Activated CD4-positive, alpha-beta T cell treated with anti-CD3 and anti-CD28 coated beads for 36 hours (primary cell): ENCODE measurements at regions of chr17 and their contacts with region 1.

Region 1: DNA sequence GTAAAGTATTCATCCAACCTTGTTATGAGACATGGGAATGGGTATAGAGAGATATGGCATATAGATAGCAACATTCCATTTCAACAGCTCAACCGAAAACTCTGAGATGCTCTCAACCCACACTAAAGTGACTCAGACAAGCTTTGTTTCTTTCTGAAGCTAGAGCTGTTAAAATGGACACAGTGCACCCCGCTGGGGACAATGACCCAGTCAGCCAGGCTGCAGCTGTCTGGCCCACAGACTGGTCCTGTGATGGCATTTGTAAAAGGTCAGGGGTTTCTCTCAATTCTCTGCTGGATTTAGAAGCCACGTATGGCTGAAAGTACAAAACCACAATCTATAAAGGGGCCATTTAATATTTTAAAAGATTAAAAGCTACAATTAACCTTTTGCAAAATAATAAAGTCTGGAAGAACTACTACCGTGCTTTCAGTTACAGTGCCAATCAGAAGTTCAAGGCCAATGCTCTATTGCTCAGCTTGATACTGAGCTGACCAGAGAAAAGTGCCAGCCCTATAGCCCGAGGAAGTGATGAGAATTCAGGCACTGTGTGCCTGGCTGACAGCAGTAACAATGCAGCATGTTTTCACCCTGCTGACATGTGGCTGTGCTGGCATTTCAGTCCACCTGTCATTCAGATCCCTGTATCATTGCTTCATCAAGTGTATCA is 60.2 kb downstream of the TEX2 start:
- DNase-seq: peak; percentile 28
- ATAC-seq: peak; percentile 42
- H3K4me3 Mint-ChIP-seq: no peak overlapping the region
- H3K27ac Mint-ChIP-seq: no peak overlapping the region
- H3K4me1 Mint-ChIP-seq: peaks cover 42% of the 10 kb centered on the region
- H3K27me3 Mint-ChIP-seq: no peaks in the 10 kb centered on the region

Region 2: GRCh38 chr17:63600569-63601438 is 602.0 kb before region 1 on chr17 and contains the start of gene TACO1:
- CTCF ChIA-PET with region 1: no interaction called
- POLR2A ChIA-PET with region 1: no interaction called
- intact Hi-C with region 1: no loop called
- DNase-seq: peak; percentile 87
- ATAC-seq: peak; percentile 94
- H3K4me3 Mint-ChIP-seq: peak within 1 kb of the TSS; percentile 97
- H3K27ac Mint-ChIP-seq: peak within 1 kb of the TSS; percentile 95
- H3K4me1 Mint-ChIP-seq: peaks cover 31% of the 10 kb centered on the region
- H3K27me3 Mint-ChIP-seq: no peaks in the 10 kb centered on the region
- total RNA-seq, gene TACO1: 25.7 to 29.2 TPM

Region 3: DNA sequence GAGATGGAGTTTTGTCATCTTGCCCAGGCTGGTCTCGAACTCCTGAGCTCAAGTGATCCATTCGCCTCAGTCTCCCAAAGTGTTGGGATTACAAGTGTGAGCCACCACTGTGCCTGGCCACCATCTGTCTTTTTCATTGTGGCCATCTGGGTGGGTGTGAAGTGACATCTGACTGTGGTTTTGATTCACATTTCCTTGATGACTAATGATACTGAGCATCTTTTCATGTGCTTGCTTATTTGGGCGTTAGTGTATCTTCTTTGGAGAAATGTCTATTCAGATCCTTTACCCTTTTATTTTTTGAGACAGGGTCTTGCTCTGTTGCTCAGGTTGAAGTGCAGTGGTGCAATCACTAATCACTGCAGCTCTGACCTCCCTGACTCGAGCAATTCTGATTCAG is 19.0 kb before region 1 on chr17:
- CTCF ChIA-PET with region 1: no interaction called
- POLR2A ChIA-PET with region 1: no interaction called
- intact Hi-C with region 1: loop called in 1 of 2 experiments (anchors 2 kb)
- DNase-seq: peak; percentile 53
- ATAC-seq: peak; percentile 74
- H3K4me3 Mint-ChIP-seq: no peak overlapping the region
- H3K27ac Mint-ChIP-seq: no peak overlapping the region
- H3K4me1 Mint-ChIP-seq: peaks cover 10% of the 10 kb centered on the region
- H3K27me3 Mint-ChIP-seq: no peaks in the 10 kb centered on the region

Region 4: DNA sequence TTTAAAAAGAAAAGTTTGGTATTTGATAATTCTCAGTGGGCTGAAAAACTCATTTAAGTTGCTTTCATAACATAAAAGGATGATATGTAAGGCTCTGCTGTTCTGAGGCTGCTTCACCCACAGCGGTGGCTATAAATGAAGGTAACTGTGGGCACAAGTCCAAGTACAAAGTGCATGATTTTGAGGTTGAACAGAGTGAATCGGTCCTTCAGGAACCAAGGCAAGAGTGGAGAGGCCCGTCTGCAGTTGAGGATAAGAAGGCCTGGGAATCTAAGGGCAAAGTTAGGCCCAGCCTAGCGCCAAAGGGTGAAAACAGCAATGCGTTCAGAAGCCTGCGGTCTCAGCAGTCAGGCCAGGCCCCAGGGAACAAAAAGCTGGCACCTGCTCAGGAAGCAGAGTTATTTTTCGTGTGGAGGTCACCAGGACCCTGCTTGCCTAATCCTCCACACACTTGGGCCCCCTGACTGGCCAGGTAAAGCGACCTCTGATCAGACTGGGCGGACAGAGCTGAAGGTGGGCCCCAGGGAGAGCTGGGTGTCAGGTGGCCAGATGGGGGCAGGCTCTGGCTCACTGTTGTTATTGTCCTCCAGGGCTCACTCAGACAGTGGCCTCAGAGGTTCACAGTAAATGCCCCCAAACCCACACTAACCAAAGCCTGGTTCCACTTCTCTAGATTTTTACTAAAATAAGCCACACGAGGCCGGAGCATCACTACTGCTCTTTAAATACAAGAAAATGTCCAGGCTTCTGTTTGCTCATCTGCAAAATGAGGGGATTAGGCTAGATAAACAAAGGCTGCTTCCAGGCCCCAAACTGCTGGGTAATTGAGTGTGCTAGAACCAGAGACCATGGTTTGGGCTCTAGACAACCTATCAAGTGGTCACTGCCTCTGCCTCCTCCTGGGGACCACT is 13.8 kb after region 1 on chr17:
- CTCF ChIA-PET with region 1: interaction called, 5 read pairs
- POLR2A ChIA-PET with region 1: interaction called, 6 read pairs
- intact Hi-C with region 1: loop called in 1 of 2 experiments (anchors 1 kb)
- DNase-seq: no peak
- ATAC-seq: no peak
- H3K4me3 Mint-ChIP-seq: no peak overlapping the region
- H3K27ac Mint-ChIP-seq: no peak overlapping the region
- H3K4me1 Mint-ChIP-seq: peaks cover 18% of the 10 kb centered on the region
- H3K27me3 Mint-ChIP-seq: no peaks in the 10 kb centered on the region

Region 5: GRCh38 chr17:64240741-64241347 is 38.0 kb after region 1 on chr17:
- CTCF ChIA-PET with region 1: interaction called, 5 read pairs
- POLR2A ChIA-PET with region 1: no interaction called
- intact Hi-C with region 1: loop called in 1 of 2 experiments (anchors 2 kb)
- DNase-seq: no peak
- ATAC-seq: no peak
- H3K4me3 Mint-ChIP-seq: no peak overlapping the region
- H3K27ac Mint-ChIP-seq: no peak overlapping the region
- H3K4me1 Mint-ChIP-seq: peaks cover 45% of the 10 kb centered on the region
- H3K27me3 Mint-ChIP-seq: no peaks in the 10 kb centered on the region